ENCODE measurements at regions of chr2 and their contacts with region 1.

Region 1: DNA sequence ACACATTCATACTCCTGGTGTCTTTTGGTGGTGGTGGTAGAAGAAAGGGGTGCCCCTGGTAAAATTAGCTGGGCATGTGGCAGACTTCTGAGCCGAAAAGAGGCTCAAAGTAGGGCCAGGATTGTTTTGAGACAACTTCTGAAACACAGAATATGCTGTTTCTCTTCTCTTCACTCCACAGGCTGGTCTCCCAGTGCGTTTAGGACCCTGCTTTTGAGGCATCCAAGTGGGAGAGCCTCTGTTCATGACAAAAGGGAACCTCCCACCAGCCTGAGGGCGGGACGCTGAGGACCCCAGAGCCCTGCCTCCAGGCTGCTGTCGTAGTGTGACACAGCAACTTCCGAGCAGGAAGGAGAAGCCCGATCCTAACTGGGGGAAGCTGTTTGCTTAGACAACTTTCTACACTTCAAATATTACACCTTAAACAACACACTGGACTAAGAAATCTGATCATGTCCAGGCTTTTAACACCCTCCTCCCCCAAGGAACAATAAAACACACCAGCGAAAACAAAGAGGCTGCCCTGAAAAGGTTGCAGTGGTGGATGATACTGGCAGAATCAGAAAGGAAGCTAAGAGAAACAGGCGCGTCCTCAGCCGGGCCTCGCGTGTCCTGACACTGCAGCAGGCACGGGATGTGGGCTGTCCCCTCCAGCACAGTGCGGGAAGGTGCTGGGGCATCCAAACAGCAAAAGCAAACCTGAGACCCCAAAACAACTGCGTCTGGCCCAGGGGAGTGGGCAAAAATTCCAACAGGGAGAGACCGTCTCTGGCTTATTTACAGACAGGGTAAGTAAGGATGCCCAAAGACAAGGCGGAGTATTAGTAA is 9.3 kb downstream of the SERTAD2 start:
- DNase-seq: peak; percentile 89 to 95 (median 94)
- H3K4me3 ChIP-seq: peak overlapping the region; percentile 17 to 80 (median 70)
- H3K27ac ChIP-seq: peak overlapping the region; percentile 96 to 98
- H3K4me1 ChIP-seq: peaks cover 38 to 96% (median 80%) of the 10 kb centered on the region in 4 experiments
- H3K27me3 ChIP-seq: no peaks in the 10 kb centered on the region

Region 2: DNA sequence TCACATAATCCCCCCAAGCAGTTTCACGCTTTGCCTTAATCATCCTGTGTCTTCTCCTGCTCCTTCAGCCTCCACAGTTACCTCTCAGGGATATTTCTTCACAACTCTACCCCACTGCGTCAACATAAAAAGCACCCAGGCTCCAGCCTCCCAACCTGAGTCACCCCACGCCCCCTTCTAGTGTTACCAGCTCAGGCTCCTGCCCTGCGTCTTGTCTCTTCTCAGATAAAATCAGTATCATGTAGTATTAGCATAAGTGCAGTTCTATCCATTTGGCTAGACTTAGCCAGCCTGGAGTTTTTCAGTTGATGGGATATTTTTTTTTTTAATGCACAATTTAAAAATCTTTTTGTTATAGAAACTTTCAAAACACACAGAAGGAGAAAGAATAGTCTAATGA is 490.6 kb before region 1 on chr2:
- CTCF ChIA-PET with region 1: no interaction called
- POLR2A ChIA-PET with region 1: no interaction called
- DNase-seq: no peak
- H3K4me3 ChIP-seq: no peak overlapping the region
- H3K27ac ChIP-seq: no peak overlapping the region
- H3K4me1 ChIP-seq: no peaks in the 10 kb centered on the region
- H3K27me3 ChIP-seq: no peaks in the 10 kb centered on the region

Region 3: GRCh38 chr2:64327505-64328172 is 316.8 kb before region 1 on chr2:
- CTCF ChIA-PET with region 1: no interaction called
- POLR2A ChIA-PET with region 1: no interaction called
- DNase-seq: peak; percentile 71 to 77 (median 73)
- H3K4me3 ChIP-seq: peak overlapping the region in 5 of 7 experiments; percentile 35 to 70 (median 55)
- H3K27ac ChIP-seq: peak overlapping the region in 1 of 2 experiments; percentile 17
- H3K4me1 ChIP-seq: peaks cover 2 to 20% (median 9%) of the 10 kb centered on the region in 4 experiments
- H3K27me3 ChIP-seq: peaks cover 0 to 1% (median 0%) of the 10 kb centered on the region in 5 experiments

Region 4: GRCh38 chr2:64359892-64360657 is 284.3 kb before region 1 on chr2:
- CTCF ChIA-PET with region 1: no interaction called
- POLR2A ChIA-PET with region 1: no interaction called
- DNase-seq: peak in 2 of 3 donors; percentile 33 to 36
- H3K4me3 ChIP-seq: no peak overlapping the region
- H3K27ac ChIP-seq: no peak overlapping the region
- H3K4me1 ChIP-seq: peaks cover 0 to under 1% (median 0%) of the 10 kb centered on the region in 4 experiments
- H3K27me3 ChIP-seq: peaks cover 0 to 16% (median 3%) of the 10 kb centered on the region in 5 experiments

Region 5: GRCh38 chr2:64562148-64562784 is 82.1 kb before region 1 on chr2:
- CTCF ChIA-PET with region 1: no interaction called
- POLR2A ChIA-PET with region 1: no interaction called
- DNase-seq: peak; percentile 48 to 74 (median 71)
- H3K4me3 ChIP-seq: no peak overlapping the region
- H3K27ac ChIP-seq: no peak overlapping the region
- H3K4me1 ChIP-seq: peaks cover 6 to 24% (median 12%) of the 10 kb centered on the region in 4 experiments
- H3K27me3 ChIP-seq: no peaks in the 10 kb centered on the region

Region 6: GRCh38 chr2:64661741-64662169 is 17.4 kb after region 1 on chr2:
- CTCF ChIA-PET with region 1: interaction called, 47 read pairs
- POLR2A ChIA-PET with region 1: interaction called, 3 read pairs
- DNase-seq: peak in 2 of 3 donors; percentile 61 to 70
- H3K4me3 ChIP-seq: peak overlapping the region in 3 of 7 experiments; percentile 13 to 31 (median 21)
- H3K27ac ChIP-seq: no peak overlapping the region
- H3K4me1 ChIP-seq: peaks cover 44 to 83% (median 58%) of the 10 kb centered on the region in 4 experiments
- H3K27me3 ChIP-seq: no peaks in the 10 kb centered on the region

Region 7: GRCh38 chr2:64763126-64763525 is 118.7 kb after region 1 on chr2:
- CTCF ChIA-PET with region 1: interaction called, 16 read pairs
- POLR2A ChIA-PET with region 1: interaction called, 3 read pairs
- DNase-seq: peak; percentile 40 to 86 (median 78)
- H3K4me3 ChIP-seq: peak overlapping the region in 4 of 7 experiments; percentile 19 to 60 (median 40)
- H3K27ac ChIP-seq: peak overlapping the region in 1 of 2 experiments; percentile 69
- H3K4me1 ChIP-seq: peaks cover 26 to 53% (median 39%) of the 10 kb centered on the region in 4 experiments
- H3K27me3 ChIP-seq: no peaks in the 10 kb centered on the region

Region 8: GRCh38 chr2:64865073-64865830 is 220.9 kb after region 1 on chr2:
- CTCF ChIA-PET with region 1: interaction called, 12 read pairs
- POLR2A ChIA-PET with region 1: interaction called, 5 read pairs
- DNase-seq: peak; percentile 61 to 84 (median 82)
- H3K4me3 ChIP-seq: peak overlapping the region; percentile 42 to 83 (median 75)
- H3K27ac ChIP-seq: peak overlapping the region in 1 of 2 experiments; percentile 65
- H3K4me1 ChIP-seq: peaks cover 10 to 52% (median 23%) of the 10 kb centered on the region in 4 experiments
- H3K27me3 ChIP-seq: no peaks in the 10 kb centered on the region